BJ (cell line): ENCODE measurements at regions of chr11 and their contacts with region 1.

Region 1: DNA sequence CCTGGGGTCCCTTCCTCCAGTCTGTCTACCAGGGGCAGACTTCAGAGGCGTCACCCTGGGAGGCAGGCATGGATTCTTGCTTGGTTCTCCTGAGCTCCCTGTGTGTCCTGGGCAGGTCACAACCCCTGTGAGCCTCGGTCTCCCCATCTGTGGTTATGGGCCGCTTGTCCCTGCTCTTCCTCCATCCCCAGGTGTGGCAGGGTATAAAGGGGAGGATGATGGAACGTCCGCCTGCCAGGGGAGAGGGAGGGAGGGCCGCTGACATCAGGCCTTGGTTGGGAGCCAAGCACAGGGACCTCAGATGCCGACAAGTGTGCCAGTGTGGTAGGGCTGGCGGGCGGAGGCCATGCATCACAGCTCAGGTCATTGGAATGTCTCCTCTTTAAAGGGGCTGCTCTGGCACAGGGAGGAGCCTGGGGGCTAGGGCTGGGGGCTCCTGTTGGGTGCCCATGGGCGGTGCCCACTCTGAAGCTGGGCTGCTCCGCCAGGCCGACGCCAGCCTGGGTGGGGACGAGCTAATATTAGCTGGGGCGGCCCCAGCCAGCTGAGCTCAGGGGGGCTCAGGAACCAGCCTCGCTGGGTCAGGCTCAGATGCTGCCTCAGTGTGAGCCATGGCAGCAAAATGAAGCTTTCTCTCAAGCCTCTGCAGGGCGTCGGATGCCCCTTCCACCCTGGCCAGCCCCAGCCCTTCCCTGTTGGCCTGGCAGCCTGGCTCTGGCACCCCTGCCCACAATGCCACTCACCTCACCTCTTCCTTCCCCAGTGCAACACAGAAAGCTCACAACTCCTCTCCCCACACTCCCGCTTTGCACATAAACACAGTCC is 12.8 kb downstream of the KCNC1 start:
- DNase-seq: no peak
- H3K4me3 ChIP-seq: no peak overlapping the region
- H3K27me3 ChIP-seq: peaks cover 1% of the 10 kb centered on the region; the same call in 1 of the 2 replicates
- CTCF ChIP-seq: no peak

Region 2: DNA sequence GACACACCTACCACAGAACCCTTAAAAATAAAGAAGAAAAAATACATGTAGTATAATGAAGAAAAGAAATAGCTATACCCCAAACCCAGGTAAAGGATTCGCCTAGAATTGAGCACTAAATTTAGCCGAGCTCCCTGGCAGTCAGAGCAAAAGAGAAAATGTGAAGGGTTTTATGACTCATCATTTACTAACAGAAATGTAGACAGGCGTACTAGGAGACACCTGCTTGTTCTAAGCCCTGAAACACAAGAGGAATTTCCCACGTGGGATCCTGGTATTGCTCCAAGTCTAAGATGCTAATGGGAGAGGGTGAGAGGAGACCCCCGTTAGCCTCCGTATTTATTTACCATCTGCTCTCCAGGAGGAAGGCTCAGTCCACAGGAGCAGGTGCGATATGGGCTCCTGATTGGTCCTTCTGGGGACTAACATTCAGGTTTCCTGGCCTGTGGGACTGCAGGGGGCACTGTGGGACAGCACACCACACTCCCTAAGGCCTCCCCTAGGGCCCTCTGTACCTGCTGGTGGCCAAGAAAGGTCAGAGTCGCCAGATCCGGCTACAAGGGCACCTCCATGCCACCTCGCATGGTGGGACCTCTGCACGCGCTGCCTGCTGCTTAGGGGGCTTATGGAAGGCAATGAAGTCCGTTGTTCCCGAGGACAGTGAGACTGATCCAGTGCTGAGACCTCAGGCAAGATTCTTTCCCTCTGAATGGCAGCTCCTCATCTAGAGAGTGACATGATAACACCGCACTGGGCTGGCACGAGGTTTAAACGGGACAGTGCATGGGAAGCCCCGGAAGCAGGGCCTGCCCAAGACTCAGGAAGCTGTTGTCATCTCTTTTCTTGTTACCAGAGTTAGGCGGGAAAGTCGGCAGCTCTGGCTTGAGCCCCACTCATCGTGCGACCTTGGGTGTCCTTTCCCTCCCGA is 13.0 kb after region 1 on chr11:
- CTCF ChIA-PET with region 1: interaction called, 17 read pairs
- POLR2A ChIA-PET with region 1: no interaction called
- DNase-seq: no peak
- H3K4me3 ChIP-seq: no peak overlapping the region
- H3K27me3 ChIP-seq: no peaks in the 10 kb centered on the region; the same call in 1 of the 2 replicates
- CTCF ChIP-seq: peak; percentile 74

Region 3: DNA sequence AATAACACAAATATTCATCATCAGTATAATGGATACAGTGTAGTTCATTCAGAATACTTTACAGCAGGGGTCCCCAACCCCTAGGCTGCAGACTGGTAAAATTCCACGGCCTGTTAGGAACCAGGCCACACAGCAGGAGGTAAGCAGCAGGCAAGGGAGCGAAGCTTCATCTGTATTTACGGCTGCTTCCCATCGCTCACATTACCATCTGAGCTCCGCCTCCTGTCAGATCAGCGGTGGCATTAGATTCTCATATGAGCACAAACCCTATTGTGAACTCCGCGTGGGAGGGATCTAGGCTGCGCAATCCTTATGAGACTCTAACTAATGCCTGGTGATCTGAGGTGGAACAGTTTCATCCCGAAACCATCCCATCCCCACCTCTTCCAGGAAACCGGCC is 140.4 kb after region 1 on chr11:
- CTCF ChIA-PET with region 1: no interaction called
- POLR2A ChIA-PET with region 1: no interaction called
- DNase-seq: no peak
- H3K4me3 ChIP-seq: no peak overlapping the region
- H3K27me3 ChIP-seq: no peaks in the 10 kb centered on the region
- CTCF ChIP-seq: no peak

Region 4: GRCh38 chr11:17898782-17899181 is 151.4 kb after region 1 on chr11:
- CTCF ChIA-PET with region 1: no interaction called
- POLR2A ChIA-PET with region 1: no interaction called
- DNase-seq: no peak
- H3K4me3 ChIP-seq: no peak overlapping the region
- H3K27me3 ChIP-seq: no peaks in the 10 kb centered on the region
- CTCF ChIP-seq: no peak